Colonic mucosa (tissue), 4 donors: ENCODE measurements at regions of chr3 and their contacts with region 1.

Region 1: DNA sequence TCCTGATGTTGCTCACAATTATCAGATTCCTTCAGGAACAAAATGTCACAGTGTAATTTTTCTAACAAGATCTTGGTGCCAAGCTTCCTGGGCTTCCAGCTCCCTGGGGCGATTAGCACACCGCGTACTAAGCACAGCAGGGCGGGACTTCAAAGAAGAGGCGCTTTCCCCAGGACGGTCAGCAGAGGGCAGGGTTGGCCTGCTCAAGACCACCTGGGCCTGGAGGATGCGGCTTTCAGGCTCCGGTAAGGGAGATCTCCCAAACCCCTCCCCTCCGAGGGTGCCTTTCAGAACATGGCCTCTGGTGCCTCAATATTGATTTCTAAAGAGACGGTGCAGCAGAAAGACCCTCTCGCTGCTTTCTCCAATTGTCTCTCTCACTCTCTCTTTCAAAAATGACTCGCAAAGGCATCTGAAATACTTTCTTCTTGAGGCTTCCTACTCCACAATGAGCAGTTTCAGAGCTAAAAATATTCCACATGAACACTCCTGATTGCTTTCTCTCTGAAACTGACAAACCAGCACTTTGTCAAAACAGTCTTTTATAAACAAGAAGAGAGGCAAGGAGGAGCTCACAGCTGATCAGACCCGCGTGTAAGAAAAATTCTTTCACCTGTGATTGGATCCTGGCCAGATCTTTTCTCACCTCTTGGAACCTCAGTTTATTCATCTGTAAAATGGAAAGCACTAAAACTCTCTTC is 154.0 kb downstream of the ADAMTS9 start:
- DNase-seq: peak; percentile 79
- H3K4me3 ChIP-seq: no peak overlapping the region
- H3K27ac ChIP-seq: no peak overlapping the region
- H3K4me1 ChIP-seq: no peaks in the 10 kb centered on the region
- H3K27me3 ChIP-seq: no peaks in the 10 kb centered on the region
- CTCF ChIP-seq: peak; percentile 71

Region 2: GRCh38 chr3:64685800-64686445 is 152.2 kb after region 1 on chr3:
- intact Hi-C with region 1: loop called (anchors 10 kb)
- DNase-seq: peak; percentile 93
- H3K4me3 ChIP-seq: peak overlapping the region; percentile 52
- H3K27ac ChIP-seq: peak overlapping the region; percentile 92
- H3K4me1 ChIP-seq: no peaks in the 10 kb centered on the region
- H3K27me3 ChIP-seq: no peaks in the 10 kb centered on the region
- CTCF ChIP-seq: peak; percentile 11

Region 3: DNA sequence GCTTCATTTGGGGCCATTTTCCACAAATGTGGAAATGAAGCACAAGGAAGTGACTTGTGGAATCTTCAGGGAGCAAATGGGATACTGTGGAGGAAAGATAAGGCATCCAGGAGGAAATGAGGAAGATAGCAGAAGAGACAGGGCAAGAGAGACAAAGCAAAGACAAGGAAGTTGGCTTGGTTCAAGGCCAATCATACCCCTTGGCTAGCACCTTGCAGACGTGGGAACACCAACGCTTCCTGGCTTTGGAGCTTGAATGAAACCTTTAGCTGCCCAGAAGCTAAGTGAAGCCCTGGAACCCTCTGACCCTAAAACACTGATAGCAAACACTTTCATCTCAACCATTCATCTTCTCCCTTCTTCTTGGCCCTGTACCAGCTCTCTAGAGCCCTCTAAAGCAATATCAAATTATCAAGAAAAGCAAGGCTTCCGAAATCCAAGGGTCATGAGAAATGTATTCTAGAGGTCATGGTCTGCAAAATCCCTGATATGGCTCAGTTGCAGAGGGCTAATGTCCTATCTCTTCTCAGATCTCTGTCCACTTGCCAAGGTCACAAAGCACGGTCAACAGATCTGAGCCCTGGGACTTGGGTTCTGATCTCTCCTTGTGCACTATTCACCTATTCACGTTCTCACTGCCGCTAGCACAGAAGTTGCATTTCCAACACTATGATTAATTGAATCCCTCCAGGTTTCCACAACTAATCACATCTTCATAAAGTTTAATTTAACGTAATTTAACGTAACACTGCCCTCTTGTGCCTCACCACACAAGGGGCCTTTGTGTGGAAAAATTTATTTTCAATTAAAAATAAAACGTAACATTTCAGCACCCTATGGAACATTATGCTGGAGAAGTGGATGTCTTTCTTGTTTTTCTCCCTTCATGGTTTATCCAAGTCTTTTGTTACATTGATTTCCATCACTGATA is 711.6 kb after region 1 on chr3:
- intact Hi-C with region 1: loop called (anchors 5 kb)
- DNase-seq: no peak
- H3K4me3 ChIP-seq: no peak overlapping the region
- H3K27ac ChIP-seq: no peak overlapping the region
- H3K4me1 ChIP-seq: no peaks in the 10 kb centered on the region
- H3K27me3 ChIP-seq: no peaks in the 10 kb centered on the region
- CTCF ChIP-seq: peak; percentile 29

Region 4: DNA sequence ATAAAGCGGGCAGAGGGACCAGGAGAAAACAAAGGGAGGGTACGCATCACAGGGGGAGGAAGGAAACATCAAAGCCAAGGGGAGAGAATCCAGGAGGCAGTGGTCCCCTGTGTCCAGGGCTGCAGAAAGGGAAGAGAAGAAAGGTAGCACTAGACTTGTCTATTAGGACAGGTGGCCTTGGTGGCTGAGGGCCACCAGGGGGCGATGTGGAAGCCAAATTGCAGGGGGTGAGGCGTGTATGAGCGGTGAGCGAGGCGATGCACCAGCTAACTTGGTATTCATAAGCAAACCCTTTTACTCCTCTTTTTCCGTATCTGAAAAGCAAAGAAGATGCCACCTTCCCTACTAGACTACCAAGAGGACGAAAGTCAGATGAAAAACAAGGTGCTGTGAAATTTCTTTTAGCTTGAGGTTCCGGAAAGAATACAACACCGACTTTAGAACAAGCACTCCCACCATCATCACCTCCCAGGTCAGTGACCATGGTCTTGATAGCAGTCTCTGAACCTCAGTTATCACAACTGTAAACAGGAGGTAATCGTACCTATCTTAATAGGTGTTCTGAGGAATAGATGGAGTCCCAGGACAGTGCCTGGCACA is 808.4 kb after region 1 on chr3:
- intact Hi-C with region 1: no loop called
- DNase-seq: peak; percentile 73
- H3K4me3 ChIP-seq: no peak overlapping the region
- H3K27ac ChIP-seq: no peak overlapping the region
- H3K4me1 ChIP-seq: no peaks in the 10 kb centered on the region
- H3K27me3 ChIP-seq: no peaks in the 10 kb centered on the region
- CTCF ChIP-seq: peak; percentile 62

Region 5: DNA sequence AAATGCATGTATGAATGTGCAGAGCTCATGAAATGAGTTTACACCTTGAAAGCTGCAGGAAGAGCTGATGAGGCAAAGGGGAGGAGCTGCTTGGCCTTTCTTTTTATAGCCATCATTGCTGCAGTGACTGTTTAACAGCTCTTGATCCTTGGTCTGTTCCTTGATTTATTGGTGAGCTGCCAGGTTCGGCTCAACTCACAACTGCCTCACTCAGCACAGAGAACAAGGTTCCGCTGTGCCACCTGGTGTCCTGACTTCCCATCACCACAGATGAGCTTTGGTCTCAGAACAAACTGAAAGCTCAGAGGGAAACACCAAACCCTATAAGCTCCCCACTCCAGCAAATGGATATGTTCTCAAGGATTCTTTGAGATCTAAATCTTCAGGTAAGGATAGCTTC is 878.8 kb after region 1 on chr3:
- intact Hi-C with region 1: loop called (anchors 5 kb)
- DNase-seq: peak; percentile 91
- H3K4me3 ChIP-seq: no peak overlapping the region
- H3K27ac ChIP-seq: peak overlapping the region; percentile 41
- H3K4me1 ChIP-seq: peaks cover 5% of the 10 kb centered on the region
- H3K27me3 ChIP-seq: no peaks in the 10 kb centered on the region
- CTCF ChIP-seq: peak; percentile 32

Region 6: DNA sequence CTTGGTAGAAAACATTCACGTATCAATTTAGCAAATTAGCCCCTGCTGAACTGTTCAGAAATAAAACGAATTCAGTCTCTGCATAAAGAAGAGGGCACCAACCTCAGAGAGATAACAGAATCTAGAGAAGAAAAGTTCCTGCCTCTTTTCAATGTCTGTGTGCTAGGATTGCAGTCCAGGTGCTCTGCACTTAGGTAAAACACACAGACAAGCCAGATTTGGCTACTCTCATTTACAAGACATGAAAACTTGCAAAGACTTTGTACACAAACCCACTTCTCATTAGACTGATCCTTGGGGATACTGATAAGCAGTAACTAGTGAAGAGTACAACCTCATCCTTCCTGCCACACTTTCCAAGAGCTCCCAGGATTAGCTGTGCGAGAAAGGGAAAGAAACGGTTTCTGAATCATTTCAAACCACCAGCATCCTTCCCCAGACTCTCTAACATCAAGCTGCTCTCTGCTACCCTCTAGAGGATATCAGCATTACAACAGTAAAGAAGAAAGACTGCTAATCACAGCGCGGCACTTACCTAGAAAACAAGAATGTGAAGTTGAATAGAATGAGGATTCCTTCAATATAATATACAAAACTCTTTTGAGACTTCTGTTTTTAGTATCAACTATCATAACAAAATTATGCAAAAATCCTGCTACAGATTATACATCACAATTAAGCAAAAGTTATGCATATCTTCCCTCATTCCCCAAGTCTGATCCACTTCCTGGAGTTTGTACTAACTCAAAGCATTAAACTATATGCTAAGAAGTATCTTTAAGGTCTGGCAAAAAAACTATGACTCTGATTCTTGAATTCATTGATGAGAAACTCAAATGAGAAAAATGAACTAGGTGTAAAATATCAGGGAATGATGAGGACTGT is 1198.5 kb after region 1 on chr3:
- intact Hi-C with region 1: loop called (anchors 10 kb)
- DNase-seq: peak; percentile 30
- H3K4me3 ChIP-seq: no peak overlapping the region
- H3K27ac ChIP-seq: no peak overlapping the region
- H3K4me1 ChIP-seq: no peaks in the 10 kb centered on the region
- H3K27me3 ChIP-seq: no peaks in the 10 kb centered on the region
- CTCF ChIP-seq: peak; percentile 62